ENCODE measurements at regions of chr9 and their contacts with region 1.

Region 1: GRCh38 chr9:34984049-34984448 is 5.5 kb upstream of the DNAJB5 start:
- DNase-seq: peak; percentile 64
- H3K4me3 Mint-ChIP-seq: no peak overlapping the region
- H3K27ac Mint-ChIP-seq: no peak overlapping the region
- H3K4me1 Mint-ChIP-seq: peaks cover 69% of the 10 kb centered on the region
- H3K27me3 Mint-ChIP-seq: no peaks in the 10 kb centered on the region

Region 2: DNA sequence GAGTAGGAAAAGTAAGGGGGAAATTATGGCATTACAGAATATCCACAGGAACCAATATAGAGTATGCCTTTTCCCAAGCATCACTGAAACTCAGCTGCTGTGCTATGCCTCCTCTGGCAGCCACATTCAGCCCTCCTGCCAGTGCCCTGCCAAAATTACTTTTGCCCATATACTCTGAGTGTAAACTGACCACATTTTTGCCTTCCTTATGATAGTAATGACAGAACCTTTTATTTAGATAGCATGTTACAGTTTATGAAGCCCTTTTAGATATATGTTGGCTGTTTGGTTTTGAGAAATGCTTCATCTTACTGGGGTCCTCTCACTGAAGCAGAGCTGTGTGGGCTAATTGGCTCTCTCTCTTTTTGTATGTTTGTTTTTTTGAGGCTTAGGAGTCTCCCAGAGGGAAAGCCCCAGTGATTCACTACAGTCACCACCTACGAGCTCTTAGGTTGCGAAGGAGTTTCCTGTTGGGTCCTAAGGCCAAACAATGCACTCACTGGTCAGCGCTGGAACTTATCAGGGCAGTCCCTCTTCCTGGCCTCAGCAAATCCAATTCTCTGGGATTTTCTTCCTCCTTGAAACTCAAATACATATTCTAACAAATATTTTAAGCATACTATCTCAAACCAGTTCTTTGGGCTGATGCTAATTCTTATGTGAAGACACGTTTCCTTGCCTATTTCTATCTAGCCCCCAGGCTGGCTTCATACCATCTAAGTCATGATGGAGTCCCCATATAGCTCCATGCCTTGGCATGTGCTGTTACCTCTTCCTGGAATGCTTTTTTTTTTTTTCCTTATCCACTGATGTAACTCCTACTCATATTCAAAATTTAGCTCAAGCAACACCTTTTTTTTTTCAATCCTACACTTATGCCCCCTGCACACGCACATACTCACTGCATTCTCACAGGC is 22.2 kb before region 1 on chr9:
- CTCF ChIA-PET with region 1: interaction called, 17 read pairs
- intact Hi-C with region 1: loop called (anchors 1 kb)
- DNase-seq: peak; percentile 57
- H3K4me3 Mint-ChIP-seq: no peak overlapping the region
- H3K27ac Mint-ChIP-seq: no peak overlapping the region
- H3K4me1 Mint-ChIP-seq: peaks cover 25% of the 10 kb centered on the region
- H3K27me3 Mint-ChIP-seq: peaks cover 49% of the 10 kb centered on the region

Measured in activated naive CD4-positive, alpha-beta T cell treated with anti-CD3 and anti-CD28 coated beads for 36 hours (primary cell).